Activated CD4-positive, alpha-beta memory T cell treated with anti-CD3 and anti-CD28 coated beads for 36 hours (primary cell): ENCODE measurements at regions of chr16 and their contacts with region 1.

Region 1: DNA sequence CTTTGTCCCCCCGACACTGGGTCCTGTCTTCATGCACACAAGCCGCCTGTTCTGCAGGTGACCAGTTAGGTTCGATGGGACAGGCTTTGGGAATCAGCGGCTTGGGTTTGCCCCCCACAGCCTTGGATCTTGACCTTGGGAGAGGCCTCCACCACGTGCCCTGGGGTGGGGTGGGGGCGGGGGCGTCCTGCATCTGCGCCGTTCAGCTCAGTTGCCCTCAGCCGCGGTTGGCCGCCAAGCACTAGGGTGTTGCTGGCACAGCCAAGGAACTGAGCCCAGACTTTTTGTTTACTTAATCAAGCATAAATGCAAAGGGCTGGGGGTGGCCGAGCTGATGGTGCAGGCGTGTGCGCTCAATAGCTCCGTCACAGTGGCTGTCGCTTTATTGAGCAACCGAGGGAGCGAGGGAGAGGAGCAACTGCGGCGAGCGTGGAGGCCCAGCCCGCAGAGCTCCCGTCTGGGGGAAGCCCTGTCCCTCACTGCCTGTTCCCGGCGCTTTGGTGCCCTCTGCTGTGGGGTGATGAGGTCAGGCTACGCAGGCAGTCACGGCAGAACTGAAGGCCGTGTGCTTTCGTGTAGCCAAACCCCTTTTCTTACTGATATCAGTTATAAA is 33.9 kb downstream of the JPH3 start:
- DNase-seq: peak; percentile 91
- H3K4me3 Mint-ChIP-seq: peak overlapping the region; percentile 68
- H3K27ac Mint-ChIP-seq: no peak overlapping the region
- H3K4me1 Mint-ChIP-seq: peaks cover 11% of the 10 kb centered on the region
- H3K27me3 Mint-ChIP-seq: peaks cover 4% of the 10 kb centered on the region

Region 2: GRCh38 chr16:87316923-87317749 is 319.0 kb before region 1 on chr16 and contains the start of gene C16orf95:
- CTCF ChIA-PET with region 1: interaction called, 9 read pairs
- POLR2A ChIA-PET with region 1: no interaction called
- intact Hi-C with region 1: loop called (anchors 2 kb)
- DNase-seq: peak; percentile 97
- H3K4me3 Mint-ChIP-seq: peak within 1 kb of the TSS; percentile 87
- H3K27ac Mint-ChIP-seq: peak within 1 kb of the TSS; percentile 94
- H3K4me1 Mint-ChIP-seq: peaks cover 12% of the 10 kb centered on the region
- H3K27me3 Mint-ChIP-seq: no peaks in the 10 kb centered on the region
- total RNA-seq, gene C16orf95: 10.9 to 15.0 TPM

Region 3: DNA sequence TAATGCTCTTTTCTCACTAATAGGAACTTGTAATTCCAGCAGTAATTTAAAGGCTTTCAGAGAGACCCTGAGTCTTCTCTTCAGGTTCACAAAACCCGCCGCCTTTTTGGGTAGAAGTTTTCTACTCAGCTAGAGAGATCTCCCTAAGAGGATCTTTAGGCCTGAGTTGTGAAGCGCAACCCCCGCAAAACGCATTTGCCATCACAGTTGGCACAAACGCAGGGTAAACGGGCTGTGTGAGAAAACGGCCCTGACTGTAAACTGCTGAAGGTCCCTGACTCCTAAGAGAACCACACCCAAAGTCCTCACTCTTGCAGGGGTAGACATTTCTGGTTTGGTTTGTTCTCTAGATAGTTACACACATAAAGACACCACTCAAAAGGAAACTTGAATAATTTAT is 232.8 kb before region 1 on chr16:
- CTCF ChIA-PET with region 1: interaction called, 13 read pairs
- POLR2A ChIA-PET with region 1: no interaction called
- intact Hi-C with region 1: no loop called
- DNase-seq: no peak
- H3K4me3 Mint-ChIP-seq: no peak overlapping the region
- H3K27ac Mint-ChIP-seq: no peak overlapping the region
- H3K4me1 Mint-ChIP-seq: peaks cover 6% of the 10 kb centered on the region
- H3K27me3 Mint-ChIP-seq: no peaks in the 10 kb centered on the region

Region 4: GRCh38 chr16:87515475-87516330 is 120.5 kb before region 1 on chr16:
- CTCF ChIA-PET with region 1: no interaction called
- POLR2A ChIA-PET with region 1: no interaction called
- intact Hi-C with region 1: no loop called
- DNase-seq: no peak
- H3K4me3 Mint-ChIP-seq: no peak overlapping the region
- H3K27ac Mint-ChIP-seq: no peak overlapping the region
- H3K4me1 Mint-ChIP-seq: no peaks in the 10 kb centered on the region
- H3K27me3 Mint-ChIP-seq: peaks cover 8% of the 10 kb centered on the region

Region 5: GRCh38 chr16:87528690-87529579 is 107.2 kb before region 1 on chr16:
- CTCF ChIA-PET with region 1: interaction called, 10 read pairs
- POLR2A ChIA-PET with region 1: no interaction called
- intact Hi-C with region 1: no loop called
- DNase-seq: no peak
- H3K4me3 Mint-ChIP-seq: no peak overlapping the region
- H3K27ac Mint-ChIP-seq: no peak overlapping the region
- H3K4me1 Mint-ChIP-seq: no peaks in the 10 kb centered on the region
- H3K27me3 Mint-ChIP-seq: peaks cover 30% of the 10 kb centered on the region

Region 6: GRCh38 chr16:87571136-87571867 is 64.9 kb before region 1 on chr16:
- CTCF ChIA-PET with region 1: interaction called, 11 read pairs
- POLR2A ChIA-PET with region 1: no interaction called
- intact Hi-C with region 1: no loop called
- DNase-seq: peak; percentile 42
- H3K4me3 Mint-ChIP-seq: no peak overlapping the region
- H3K27ac Mint-ChIP-seq: no peak overlapping the region
- H3K4me1 Mint-ChIP-seq: no peaks in the 10 kb centered on the region
- H3K27me3 Mint-ChIP-seq: peaks cover 3% of the 10 kb centered on the region

Region 7: DNA sequence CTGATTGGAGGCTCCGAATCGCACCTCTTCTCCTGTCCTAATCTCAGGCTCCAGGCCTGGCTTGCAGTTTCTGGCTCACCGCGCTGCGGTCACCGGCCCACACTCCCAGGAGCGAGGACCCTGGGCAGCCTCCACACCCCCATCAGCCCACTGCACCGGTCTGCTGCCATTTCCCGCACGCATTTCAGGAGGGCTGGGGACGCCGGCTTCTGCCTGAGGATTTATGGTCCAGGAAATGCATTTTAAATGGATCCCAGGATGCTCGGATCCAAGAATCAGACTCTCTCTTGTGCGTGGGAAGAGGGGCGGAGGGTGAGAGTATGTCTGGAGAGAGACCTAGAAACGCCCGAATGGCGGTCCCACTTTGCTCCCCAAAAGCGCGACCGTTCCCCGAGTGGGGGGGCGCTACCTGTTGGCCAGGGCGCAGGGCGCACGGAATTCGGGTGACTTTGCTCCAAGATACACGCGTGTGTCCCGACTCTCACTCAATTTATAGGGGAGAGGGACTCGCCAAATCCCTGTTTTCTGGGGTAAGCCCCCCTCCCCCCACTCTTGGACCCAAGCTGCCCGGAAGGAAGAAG is 34.7 kb before region 1 on chr16:
- CTCF ChIA-PET with region 1: interaction called, 10 read pairs
- POLR2A ChIA-PET with region 1: no interaction called
- intact Hi-C with region 1: no loop called
- DNase-seq: no peak
- H3K4me3 Mint-ChIP-seq: no peak overlapping the region
- H3K27ac Mint-ChIP-seq: no peak overlapping the region
- H3K4me1 Mint-ChIP-seq: peaks cover 10% of the 10 kb centered on the region
- H3K27me3 Mint-ChIP-seq: peaks cover 56% of the 10 kb centered on the region

Region 8: GRCh38 chr16:87687126-87687910 is 51.1 kb after region 1 on chr16:
- CTCF ChIA-PET with region 1: no interaction called
- POLR2A ChIA-PET with region 1: no interaction called
- intact Hi-C with region 1: no loop called
- DNase-seq: no peak
- H3K4me3 Mint-ChIP-seq: no peak overlapping the region
- H3K27ac Mint-ChIP-seq: no peak overlapping the region
- H3K4me1 Mint-ChIP-seq: peaks cover 1% of the 10 kb centered on the region
- H3K27me3 Mint-ChIP-seq: peaks cover 4% of the 10 kb centered on the region

Region 9: GRCh38 chr16:87877938-87878507 is 241.8 kb after region 1 on chr16:
- CTCF ChIA-PET with region 1: interaction called, 13 read pairs
- POLR2A ChIA-PET with region 1: no interaction called
- intact Hi-C with region 1: no loop called
- DNase-seq: peak; percentile 68
- H3K4me3 Mint-ChIP-seq: no peak overlapping the region
- H3K27ac Mint-ChIP-seq: no peak overlapping the region
- H3K4me1 Mint-ChIP-seq: peaks cover 39% of the 10 kb centered on the region
- H3K27me3 Mint-ChIP-seq: peaks cover 2% of the 10 kb centered on the region